Endothelial cell of umbilical vein (primary cell): ENCODE measurements at regions of chr11 and their contacts with region 1.

Region 1: GRCh38 chr11:17077520-17078401 is at the start of gene RPS13:
- DNase-seq: peak; percentile 100
- H3K4me3 ChIP-seq: peak within 1 kb of the TSS; percentile 69 to 90 (median 83)
- H3K27ac ChIP-seq: peak within 1 kb of the TSS; percentile 76
- H3K4me1 ChIP-seq: peaks cover 14% of the 10 kb centered on the region
- H3K27me3 ChIP-seq: no peaks in the 10 kb centered on the region
- CTCF ChIP-seq: no peak
- POLR2A ChIP-seq: peak; percentile 99
- total RNA-seq, gene RPS13: 1,051 and 1,169 TPM in 2 replicates

Region 2: DNA sequence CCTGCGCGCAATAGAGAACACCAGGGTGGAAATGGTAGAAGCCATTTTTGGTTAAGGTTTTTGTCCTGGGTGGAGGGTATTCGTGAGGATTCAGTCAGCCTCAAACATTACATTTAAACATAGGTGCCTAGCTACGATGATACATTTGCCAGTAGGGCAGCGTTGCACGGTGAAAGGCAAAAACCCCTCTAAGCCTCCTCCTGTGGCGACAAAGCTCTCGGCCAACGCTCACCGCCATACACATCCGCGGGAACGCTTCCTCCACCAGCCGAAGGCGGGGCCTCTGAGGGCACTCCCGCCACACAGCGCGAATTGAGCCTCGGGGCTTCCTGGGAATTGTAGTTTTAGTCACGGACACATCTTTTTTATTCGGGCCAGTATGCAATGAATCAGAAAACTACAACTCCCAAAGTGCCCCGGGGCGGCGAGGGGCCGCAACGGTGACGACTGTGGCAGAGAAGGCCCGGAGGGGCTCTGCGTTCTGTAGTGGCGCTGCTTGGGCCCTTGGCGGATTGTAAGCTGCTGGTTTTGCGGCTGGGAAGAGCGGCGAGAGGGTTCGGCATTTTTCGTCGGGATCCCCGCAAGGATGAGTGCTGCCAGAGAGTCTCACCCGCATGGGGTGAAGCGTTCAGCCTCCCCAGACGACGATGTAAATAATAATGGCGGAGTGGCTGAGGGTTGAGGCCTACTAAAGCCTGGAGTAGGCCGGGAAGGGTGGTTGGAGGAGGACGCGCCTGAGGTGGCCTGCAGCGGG is 339.4 kb before region 1 on chr11 and contains the start of gene C11orf58:
- CTCF ChIA-PET with region 1: no interaction called
- POLR2A ChIA-PET with region 1: no interaction called
- dilution Hi-C with region 1: no loop called
- intact Hi-C with region 1: loop called (anchors 1 kb)
- DNase-seq: peak; percentile 99
- H3K4me3 ChIP-seq: peak within 1 kb of the TSS; percentile 80 to 94 (median 87)
- H3K27ac ChIP-seq: peak within 1 kb of the TSS; percentile 98
- H3K4me1 ChIP-seq: peaks cover 18% of the 10 kb centered on the region
- H3K27me3 ChIP-seq: no peaks in the 10 kb centered on the region
- CTCF ChIP-seq: no peak
- POLR2A ChIP-seq: peak; percentile 92
- total RNA-seq, gene C11orf58: 131 and 150 TPM in 2 replicates

Region 3: DNA sequence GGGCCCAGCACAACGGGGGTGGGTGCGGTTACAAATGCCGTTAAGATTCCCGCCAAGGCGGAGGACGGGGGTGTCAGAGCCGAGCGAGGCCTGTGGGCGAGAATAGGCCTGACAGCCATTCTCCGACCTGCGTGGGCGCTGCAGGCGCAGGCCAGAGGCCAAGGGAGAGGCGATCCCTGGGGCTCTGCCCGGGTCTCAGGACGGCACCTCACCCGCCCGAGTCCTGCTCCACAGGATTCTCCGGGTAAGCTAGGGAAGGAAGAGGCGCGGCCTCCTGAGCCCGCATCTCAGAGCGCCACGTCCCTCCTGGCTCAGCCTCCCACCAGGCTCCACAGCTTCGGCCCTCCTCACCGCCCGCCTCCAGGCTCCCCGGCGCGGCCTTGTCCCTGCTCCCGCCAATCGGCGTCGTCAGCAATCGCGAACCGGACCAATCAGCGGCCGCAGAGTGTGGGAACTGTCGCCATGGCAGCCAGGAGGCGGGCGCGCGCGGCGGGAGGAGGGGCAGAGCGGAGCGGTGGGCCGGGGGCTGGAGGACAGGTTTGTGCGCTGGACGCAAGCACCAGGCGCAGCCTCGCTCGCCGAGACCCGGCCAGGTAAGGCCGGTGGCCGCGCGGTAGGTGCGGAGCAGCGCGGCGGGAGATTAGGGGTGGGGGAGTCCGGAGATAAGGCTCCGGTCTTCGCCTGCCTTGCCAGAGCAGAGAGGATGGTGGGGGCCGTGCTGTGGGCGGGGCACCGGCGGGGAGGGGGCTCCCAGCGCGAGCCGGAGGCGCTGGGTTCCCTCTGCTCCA is 198.7 kb after region 1 on chr11 and contains the start of gene NUCB2:
- CTCF ChIA-PET with region 1: no interaction called
- POLR2A ChIA-PET with region 1: interaction called, 4 read pairs
- dilution Hi-C with region 1: no loop called
- intact Hi-C with region 1: loop called (anchors 5 kb)
- DNase-seq: peak; percentile 98
- H3K4me3 ChIP-seq: peak within 1 kb of the TSS; percentile 84 to 95 (median 95)
- H3K27ac ChIP-seq: peak within 1 kb of the TSS; percentile 65
- H3K4me1 ChIP-seq: peaks cover 11% of the 10 kb centered on the region
- H3K27me3 ChIP-seq: no peaks in the 10 kb centered on the region
- CTCF ChIP-seq: no peak
- POLR2A ChIP-seq: peak; percentile 97
- total RNA-seq, gene NUCB2: 114 and 123 TPM in 2 replicates